Esophagus muscularis mucosa (tissue), 4 donors: ENCODE measurements at regions of chr10 and their contacts with region 1.

Region 1: DNA sequence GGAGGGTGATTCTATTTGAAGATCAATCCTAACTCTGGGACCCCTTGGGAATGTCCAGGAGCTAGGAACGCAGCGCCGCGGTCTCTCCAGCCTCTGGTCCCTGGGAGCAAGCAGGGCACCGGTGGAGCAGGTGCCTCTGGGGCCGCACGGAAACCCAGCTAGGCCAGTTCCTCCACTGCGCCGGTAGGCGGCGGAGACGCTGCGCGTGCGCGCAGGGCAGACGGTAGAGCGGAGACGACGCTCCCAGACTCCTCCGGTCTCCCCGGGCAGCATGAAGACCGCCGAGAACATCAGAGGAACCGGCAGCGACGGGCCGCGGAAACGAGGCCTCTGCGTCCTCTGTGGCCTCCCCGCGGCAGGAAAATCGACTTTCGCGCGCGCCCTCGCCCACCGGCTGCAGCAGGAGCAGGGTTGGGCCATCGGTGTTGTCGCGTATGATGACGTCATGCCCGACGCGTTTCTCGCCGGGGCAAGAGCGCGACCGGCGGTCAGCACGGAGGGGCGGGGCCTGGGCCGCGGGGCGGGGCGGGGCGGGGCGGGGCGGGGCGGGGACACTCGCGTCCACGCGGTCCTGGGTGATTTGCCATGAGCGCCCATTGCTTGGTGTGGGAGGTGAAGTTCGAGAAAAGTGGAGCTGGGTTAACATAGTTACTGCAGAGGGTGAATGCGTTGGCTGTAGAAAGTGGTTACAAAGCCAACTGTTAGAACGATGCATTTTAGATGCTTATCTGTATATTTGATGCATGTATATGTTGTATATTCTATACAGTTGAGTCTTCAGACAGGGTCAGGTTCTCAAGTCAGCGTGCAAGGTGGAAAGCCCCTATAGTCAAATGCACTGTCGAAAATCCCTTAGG is at the start of gene PSTK:
- DNase-seq: peak; percentile 97
- H3K4me3 ChIP-seq: peak within 1 kb of the TSS; percentile 61 to 91 (median 76)
- H3K27ac ChIP-seq: peak within 1 kb of the TSS; percentile 88 to 93 (median 90)
- H3K4me1 ChIP-seq: peaks cover 6 to 17% (median 16%) of the 10 kb centered on the region in 4 donors
- H3K27me3 ChIP-seq: no peaks in the 10 kb centered on the region
- CTCF ChIP-seq: peak; percentile 93 to 99 (median 94)
- EP300 ChIP-seq: no peak
- POLR2A ChIP-seq: no peak
- total RNA-seq, gene PSTK: 1.4 to 3.3 (median 2.7) TPM

Region 2: GRCh38 chr10:123008439-123009205 is 28.2 kb after region 1 on chr10 and contains the starts of genes ACADSB and IKZF5:
- intact Hi-C with region 1: loop called (anchors 2 kb)
- DNase-seq: peak; percentile 99
- H3K4me3 ChIP-seq: peak within 1 kb of the TSS; percentile 91 to 99 (median 98)
- H3K27ac ChIP-seq: peak within 1 kb of the TSS; percentile 90 to 95 (median 94)
- H3K4me1 ChIP-seq: peaks cover 41 to 57% (median 56%) of the 10 kb centered on the region in 4 donors
- H3K27me3 ChIP-seq: no peaks in the 10 kb centered on the region
- CTCF ChIP-seq: peak in 1 of 3 experiments; percentile 11
- EP300 ChIP-seq: no peak
- POLR2A ChIP-seq: peak; percentile 27
- total RNA-seq, gene ACADSB: 12.9 to 19.1 (median 14.0) TPM
- total RNA-seq, gene IKZF5: 5.7 to 12.0 (median 7.2) TPM